Uterus (tissue), 4 donors: ENCODE measurements at regions of chr22 and their contacts with region 1.

Region 1: GRCh38 chr22:24175160-24175808 is 6.0 kb upstream of the SUSD2 start:
- DNase-seq: peak; percentile 82 to 84
- H3K4me3 ChIP-seq: no peak overlapping the region
- H3K27ac ChIP-seq: peak overlapping the region; percentile 64 to 65
- H3K4me1 ChIP-seq: peaks cover 0 to 8% of the 10 kb centered on the region in 2 donors
- H3K27me3 ChIP-seq: no peaks in the 10 kb centered on the region
- CTCF ChIP-seq: peak; percentile 89 to 94 (median 93)
- POLR2A ChIP-seq: peak in 1 of 2 donors; percentile 21

Region 2: GRCh38 chr22:23984430-23984829 is 190.9 kb before region 1 on chr22:
- intact Hi-C with region 1: no loop called
- DNase-seq: no peak
- H3K4me3 ChIP-seq: no peak overlapping the region
- H3K27ac ChIP-seq: no peak overlapping the region
- H3K4me1 ChIP-seq: no peaks in the 10 kb centered on the region
- H3K27me3 ChIP-seq: no peaks in the 10 kb centered on the region
- CTCF ChIP-seq: peak in 2 of 4 experiments; percentile 38 to 41
- POLR2A ChIP-seq: no peak

Region 3: GRCh38 chr22:24106385-24107381 is 68.6 kb before region 1 on chr22:
- intact Hi-C with region 1: loop called (anchors 10 kb)
- DNase-seq: peak; percentile 31 to 41
- H3K4me3 ChIP-seq: no peak overlapping the region
- H3K27ac ChIP-seq: peak overlapping the region; percentile 67 to 74
- H3K4me1 ChIP-seq: peaks cover 0 to 5% of the 10 kb centered on the region in 2 donors
- H3K27me3 ChIP-seq: no peaks in the 10 kb centered on the region
- CTCF ChIP-seq: peak; percentile 27 to 51 (median 42)
- POLR2A ChIP-seq: no peak